ENCODE measurements at regions of chr2 and their contacts with region 1.

Region 1: DNA sequence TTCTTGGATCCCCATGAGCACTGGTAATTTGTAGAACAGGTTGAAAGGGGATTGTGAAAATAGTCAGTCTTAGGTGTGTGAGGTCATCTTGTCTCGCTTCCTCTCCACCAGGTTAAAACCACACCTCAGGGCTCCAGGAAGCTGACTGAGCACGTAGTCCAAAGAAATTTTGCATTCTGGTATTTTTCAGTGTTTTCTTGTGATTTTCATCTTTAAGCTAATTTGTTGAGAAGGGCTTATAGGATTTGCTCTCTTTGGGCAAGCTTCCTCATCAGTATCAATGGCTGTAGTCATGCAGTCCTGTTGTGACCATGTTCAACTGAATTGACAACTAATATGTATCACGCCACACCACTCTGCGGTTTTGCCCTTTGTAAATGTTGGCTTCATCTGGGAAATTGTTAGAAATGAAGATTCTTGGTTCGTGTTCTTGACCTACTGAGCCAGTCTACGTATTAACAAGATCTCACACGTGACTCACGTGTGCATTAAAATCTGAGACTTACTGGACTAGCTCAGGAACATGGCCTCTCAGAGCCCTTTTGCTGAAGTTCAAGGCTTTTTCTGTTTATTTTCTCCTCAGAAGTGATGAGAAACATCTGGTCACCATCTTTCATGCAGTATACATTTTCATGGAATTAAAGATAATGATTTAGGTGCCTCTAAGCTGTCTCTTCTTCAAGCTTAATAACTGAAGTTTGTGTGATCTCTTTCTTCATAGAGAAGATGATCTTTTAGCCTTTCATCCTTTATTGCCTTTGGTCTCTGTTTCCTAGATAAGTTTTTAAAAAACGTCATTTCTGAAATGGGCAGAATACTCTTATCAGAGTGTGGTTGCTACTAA is 32.8 kb downstream of the FMNL2 start:
- DNase-seq: no peak
- H3K4me3 Mint-ChIP-seq: no peak overlapping the region
- H3K27ac Mint-ChIP-seq: no peak overlapping the region
- H3K4me1 Mint-ChIP-seq: peaks cover 10% of the 10 kb centered on the region
- H3K27me3 Mint-ChIP-seq: no peaks in the 10 kb centered on the region
- CTCF ChIP-seq: no peak

Region 2: GRCh38 chr2:152395103-152395502 is 27.3 kb after region 1 on chr2:
- CTCF ChIA-PET with region 1: interaction called, 10 read pairs
- intact Hi-C with region 1: no loop called
- DNase-seq: no peak
- H3K4me3 Mint-ChIP-seq: no peak overlapping the region
- H3K27ac Mint-ChIP-seq: no peak overlapping the region
- H3K4me1 Mint-ChIP-seq: peaks cover 33% of the 10 kb centered on the region
- H3K27me3 Mint-ChIP-seq: no peaks in the 10 kb centered on the region
- CTCF ChIP-seq: no peak

Measured in Calu3 (cell line).